Sciatic nerve (tissue), 2 donors: ENCODE measurements at regions of chr6 and their contacts with region 1.

Region 1: GRCh38 chr6:154796484-154796883 is 63.3 kb downstream of the SCAF8 start:
- DNase-seq: no peak
- ATAC-seq: no peak

Region 2: GRCh38 chr6:154675602-154676088 is 120.8 kb before region 1 on chr6:
- intact Hi-C with region 1: loop called (anchors 5 kb)
- DNase-seq: peak; percentile 92
- ATAC-seq: peak; percentile 97

Region 3: GRCh38 chr6:155062866-155063341 is 266.4 kb after region 1 on chr6:
- intact Hi-C with region 1: no loop called
- DNase-seq: no peak
- ATAC-seq: peak; percentile 61